AG04449 (cell line): ENCODE measurements at regions of chr6 and their contacts with region 1.

Region 1: DNA sequence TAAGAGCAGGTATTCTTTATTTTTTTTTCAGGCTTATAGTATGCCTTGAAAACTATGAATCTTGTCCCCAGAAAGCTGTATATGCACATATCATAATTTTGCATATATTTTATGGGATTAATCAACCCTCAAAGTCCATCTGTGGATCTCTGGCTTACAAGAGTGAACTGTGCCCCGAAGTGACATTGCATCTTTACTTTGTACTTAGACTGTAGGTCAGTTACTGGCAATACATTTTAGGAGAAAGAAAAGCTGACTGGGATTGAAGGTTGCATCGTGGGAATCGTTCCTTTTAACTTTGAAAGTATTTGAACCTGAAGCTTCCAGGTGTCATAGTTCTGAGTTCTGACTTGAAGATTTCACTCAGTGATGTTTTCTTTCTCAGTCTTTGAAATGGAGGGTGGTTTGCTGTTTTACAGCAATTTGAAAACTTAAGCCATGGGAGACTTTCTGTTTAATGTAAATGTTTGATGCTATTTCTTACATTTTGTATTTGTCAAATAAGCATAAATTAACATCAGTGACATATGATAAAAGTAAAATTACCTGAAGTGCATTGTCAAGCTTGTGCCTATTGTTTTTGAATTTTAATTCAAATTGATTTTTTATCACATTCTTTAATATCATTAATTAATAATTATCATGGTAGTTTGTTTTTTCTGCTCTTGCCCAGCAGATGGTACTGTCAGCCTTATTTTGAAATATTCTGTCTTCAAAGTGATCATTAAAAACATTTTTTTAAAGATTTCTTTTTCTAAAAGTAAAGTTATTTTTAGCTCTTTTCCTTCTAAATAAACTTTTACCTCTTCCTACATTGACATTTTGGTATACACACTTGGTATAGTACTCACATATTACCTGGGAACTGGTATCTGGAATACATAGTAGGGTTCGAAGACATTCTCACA is 29.0 kb downstream of the L3MBTL3 start:
- DNase-seq: no peak
- H3K4me3 ChIP-seq: no peak overlapping the region
- CTCF ChIP-seq: no peak

Region 2: DNA sequence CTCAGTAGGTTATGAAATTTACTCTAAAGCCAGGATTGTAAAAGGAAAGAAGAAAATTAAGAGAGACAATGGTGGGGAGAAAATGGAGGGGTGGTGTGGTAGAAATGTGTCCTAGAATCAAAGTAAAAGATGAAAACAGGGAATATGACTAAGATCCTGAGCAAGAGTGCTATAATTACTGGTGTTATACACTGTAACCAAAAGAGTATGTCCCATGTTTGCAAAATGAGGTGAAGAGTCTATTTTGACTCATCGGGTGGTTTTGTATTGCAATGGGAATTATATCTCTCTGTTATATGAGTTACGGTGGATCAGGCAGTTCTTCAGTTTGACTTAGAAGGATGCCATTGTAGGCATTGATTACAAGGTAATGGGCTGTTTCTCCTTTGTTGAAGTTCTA is 20.5 kb before region 1 on chr6:
- CTCF ChIA-PET with region 1: no interaction called
- POLR2A ChIA-PET with region 1: no interaction called
- DNase-seq: no peak
- H3K4me3 ChIP-seq: no peak overlapping the region
- CTCF ChIP-seq: no peak

Region 3: DNA sequence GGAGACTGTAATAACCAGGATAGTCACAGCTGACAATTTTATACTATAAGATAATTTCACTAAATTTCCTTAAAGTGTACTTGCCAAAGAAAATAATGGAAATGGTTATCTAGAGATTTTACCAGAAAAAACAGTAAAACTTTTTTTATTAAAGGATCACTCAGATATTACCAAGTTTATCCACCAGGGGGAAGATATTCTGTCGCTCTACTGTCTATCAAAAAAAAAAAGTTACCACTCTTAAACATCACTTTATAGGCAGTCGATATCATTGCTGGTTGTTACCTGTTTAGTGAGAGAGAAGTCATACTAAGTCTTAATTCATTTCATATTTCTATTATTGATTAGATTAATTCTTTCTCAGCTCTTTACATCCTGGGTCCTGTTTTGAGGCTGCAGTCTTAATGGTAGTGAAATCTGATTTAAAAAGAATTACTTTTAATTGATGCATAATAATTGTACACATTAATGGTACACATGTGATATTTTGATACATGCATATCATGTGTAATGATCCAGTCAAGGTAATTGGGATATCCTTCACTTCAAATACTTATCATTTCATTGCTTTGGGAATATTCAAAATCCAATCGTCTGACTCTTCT is 10.0 kb before region 1 on chr6:
- CTCF ChIA-PET with region 1: interaction called, 36 read pairs
- POLR2A ChIA-PET with region 1: interaction called, 3 read pairs
- DNase-seq: no peak
- H3K4me3 ChIP-seq: no peak overlapping the region
- CTCF ChIP-seq: peak; percentile 15

Region 4: DNA sequence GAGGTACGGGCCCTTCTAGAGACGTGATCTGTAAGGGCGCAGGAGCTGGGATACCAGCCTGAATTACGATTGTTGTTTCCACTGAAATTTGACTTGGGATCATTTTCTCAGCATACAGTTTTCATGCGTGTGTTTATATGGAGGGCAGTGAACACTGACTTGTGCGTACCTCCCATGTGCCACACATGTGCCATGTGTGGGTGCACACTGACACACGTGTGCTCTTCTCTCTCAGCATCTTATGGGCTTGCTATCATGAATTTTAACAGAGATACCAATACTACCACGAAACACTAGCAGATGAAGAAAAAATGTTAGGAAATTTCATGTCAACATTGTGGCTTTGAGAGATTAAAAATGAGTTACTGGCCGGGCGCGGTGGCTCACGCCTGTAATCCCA is 10.2 kb after region 1 on chr6:
- CTCF ChIA-PET with region 1: no interaction called
- POLR2A ChIA-PET with region 1: no interaction called
- DNase-seq: no peak
- H3K4me3 ChIP-seq: no peak overlapping the region
- CTCF ChIP-seq: no peak

Region 5: DNA sequence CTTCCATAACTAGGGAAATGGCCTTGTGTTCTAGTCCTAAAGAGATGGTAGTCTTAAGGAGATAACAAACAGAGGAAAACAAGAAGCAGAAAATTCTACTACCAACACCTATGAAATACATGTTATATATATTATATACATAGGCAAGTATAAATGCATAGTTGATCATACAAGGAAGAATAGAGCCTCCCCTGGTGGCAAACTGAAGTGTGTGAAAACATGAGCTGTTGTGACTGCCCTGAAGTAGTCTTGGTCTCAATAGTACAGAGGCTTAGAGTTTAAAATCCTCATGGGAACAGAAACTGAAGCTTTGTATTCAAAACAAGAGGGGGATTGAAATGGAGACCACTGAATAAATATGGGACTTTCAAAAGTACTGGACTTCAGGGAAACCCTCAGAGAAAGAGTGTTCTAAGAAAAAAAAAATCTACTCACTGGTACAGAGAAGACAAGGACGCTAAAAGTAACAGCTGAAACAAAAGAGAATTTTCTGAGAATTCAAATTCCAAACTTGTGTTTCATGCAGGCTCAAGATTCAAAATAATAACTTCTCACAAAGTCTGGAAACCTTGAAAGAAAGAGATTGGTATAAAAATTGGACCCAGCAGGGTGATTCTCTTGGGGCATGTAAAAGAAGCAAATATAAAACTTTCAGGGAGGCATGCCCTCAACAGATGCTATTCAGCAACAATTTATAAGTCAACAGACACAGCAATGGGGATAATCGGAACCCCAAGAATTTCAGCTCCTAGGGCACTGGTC is 235.1 kb after region 1 on chr6:
- CTCF ChIA-PET with region 1: interaction called, 41 read pairs
- POLR2A ChIA-PET with region 1: no interaction called
- DNase-seq: no peak
- H3K4me3 ChIP-seq: no peak overlapping the region
- CTCF ChIP-seq: peak; percentile 55

Region 6: GRCh38 chr6:130872250-130873095 is 825.1 kb after region 1 on chr6:
- CTCF ChIA-PET with region 1: interaction called, 14 read pairs
- POLR2A ChIA-PET with region 1: no interaction called
- DNase-seq: no peak
- H3K4me3 ChIP-seq: no peak overlapping the region
- CTCF ChIP-seq: peak; percentile 84